ENCODE measurements at regions of chr16 and their contacts with region 1.

Region 1: GRCh38 chr16:22291860-22292692 is 5.1 kb upstream of the POLR3E start:
- DNase-seq: no peak
- H3K4me3 ChIP-seq: no peak overlapping the region
- H3K27ac ChIP-seq: no peak overlapping the region
- H3K4me1 ChIP-seq: peaks cover 6 to 9% (median 8%) of the 10 kb centered on the region in 4 donors
- H3K27me3 ChIP-seq: no peaks in the 10 kb centered on the region
- CTCF ChIP-seq: no peak
- EP300 ChIP-seq: no peak
- POLR2A ChIP-seq: no peak

Region 2: GRCh38 chr16:22240023-22240710 is 51.9 kb before region 1 on chr16:
- intact Hi-C with region 1: loop called (anchors 5 kb)
- DNase-seq: no peak
- H3K4me3 ChIP-seq: no peak overlapping the region
- H3K27ac ChIP-seq: peak overlapping the region; percentile 65 to 74 (median 68)
- H3K4me1 ChIP-seq: peaks cover 18 to 58% (median 39%) of the 10 kb centered on the region in 4 donors
- H3K27me3 ChIP-seq: no peaks in the 10 kb centered on the region
- CTCF ChIP-seq: no peak
- EP300 ChIP-seq: no peak
- POLR2A ChIP-seq: no peak